ENCODE measurements at regions of chr5 and their contacts with region 1.

Region 1: DNA sequence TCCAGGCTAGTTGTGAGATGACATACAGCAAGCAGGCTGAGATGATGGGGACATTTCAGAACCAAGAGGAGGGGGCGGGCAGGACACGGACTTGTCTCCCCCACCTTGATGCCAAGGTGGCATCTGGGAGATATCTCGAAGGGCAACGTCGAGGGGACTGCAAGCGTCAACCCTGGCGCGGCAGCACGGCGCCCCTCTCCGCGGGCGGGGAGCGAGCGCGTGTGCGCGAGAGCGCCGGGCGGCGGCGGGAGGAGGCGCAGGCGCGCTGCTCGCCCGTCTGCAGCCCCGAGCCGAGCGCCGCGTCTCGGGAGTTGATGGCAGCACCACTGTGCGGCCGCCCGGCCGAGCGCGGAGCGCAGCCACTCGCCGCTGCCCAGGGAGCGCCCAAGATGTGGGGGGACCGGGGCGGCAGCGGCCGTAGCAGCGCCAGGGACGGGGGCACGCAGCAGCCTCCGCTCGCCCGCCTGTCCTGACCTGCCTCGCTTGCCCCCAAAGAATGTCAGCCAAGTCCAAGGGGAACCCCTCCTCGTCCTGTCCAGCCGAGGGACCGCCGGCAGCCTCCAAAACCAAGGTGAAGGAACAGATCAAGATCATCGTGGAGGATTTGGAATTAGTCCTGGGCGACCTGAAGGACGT is at the start of gene PRR16:
- DNase-seq: peak; percentile 35 to 69
- ATAC-seq: peak; percentile 81 to 96 (median 88)
- H3K4me3 ChIP-seq: peak within 1 kb of the TSS; percentile 50 to 85 (median 72)
- H3K27ac ChIP-seq: peak within 1 kb of the TSS; percentile 56 to 89 (median 81)
- H3K4me1 ChIP-seq: peaks cover 0 to 27% (median 20%) of the 10 kb centered on the region in 9 donors
- H3K27me3 ChIP-seq: peaks cover 0 to 41% (median 0%) of the 10 kb centered on the region in 7 donors
- CTCF ChIP-seq: peak in 5 of 9 donors; percentile 36 to 53 (median 49)
- total RNA-seq, gene PRR16: 5.6 to 22.9 (median 11.7) TPM

Region 2: GRCh38 chr5:119943148-119943547 is 521.0 kb before region 1 on chr5:
- intact Hi-C with region 1: loop called in 6 of 10 experiments (anchors 2 to 10 kb)
- DNase-seq: no peak
- ATAC-seq: peak in 2 of 8 donors; percentile 49 to 55
- H3K4me3 ChIP-seq: no peak overlapping the region
- H3K27ac ChIP-seq: no peak overlapping the region
- H3K4me1 ChIP-seq: no peaks in the 10 kb centered on the region
- H3K27me3 ChIP-seq: no peaks in the 10 kb centered on the region
- CTCF ChIP-seq: peak in 8 of 9 donors; percentile 8 to 60 (median 38)

Region 3: GRCh38 chr5:119966028-119966427 is 498.1 kb before region 1 on chr5:
- intact Hi-C with region 1: loop called in 2 of 10 experiments (anchors 5 to 10 kb)
- DNase-seq: no peak
- ATAC-seq: peak in 4 of 8 donors; percentile 57 to 77 (median 69)
- H3K4me3 ChIP-seq: no peak overlapping the region
- H3K27ac ChIP-seq: peak overlapping the region in 1 of 10 donors; percentile 6
- H3K4me1 ChIP-seq: peaks cover 0 to 5% (median 0%) of the 10 kb centered on the region in 9 donors
- H3K27me3 ChIP-seq: no peaks in the 10 kb centered on the region
- CTCF ChIP-seq: peak in 7 of 9 donors; percentile 14 to 52 (median 34)

Region 4: DNA sequence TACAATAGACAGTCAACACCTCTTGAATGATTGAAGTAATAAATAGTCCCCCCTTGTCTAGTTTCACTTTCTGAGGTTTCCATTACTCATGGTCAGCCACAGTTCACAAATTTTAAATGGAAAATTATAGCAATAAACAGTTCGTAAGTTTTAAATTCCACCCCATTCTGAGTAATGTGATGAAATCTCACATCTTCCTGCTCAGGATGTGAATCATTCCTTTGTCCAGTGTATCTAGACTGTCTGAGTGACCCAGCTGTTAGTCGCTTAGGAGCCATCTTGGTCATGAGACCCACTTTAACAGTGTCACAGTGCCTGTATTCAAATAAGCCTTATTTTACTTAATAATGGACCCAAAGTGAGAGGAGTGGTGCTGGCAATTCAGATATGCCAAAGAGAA is 311.6 kb before region 1 on chr5:
- intact Hi-C with region 1: loop called in 2 of 10 experiments (anchors 10 kb)
- DNase-seq: no peak
- ATAC-seq: peak in 4 of 8 donors; percentile 51 to 86 (median 70)
- H3K4me3 ChIP-seq: no peak overlapping the region
- H3K27ac ChIP-seq: peak overlapping the region in 2 of 10 donors; percentile 14 to 75
- H3K4me1 ChIP-seq: peaks cover 0 to 8% (median 0%) of the 10 kb centered on the region in 9 donors
- H3K27me3 ChIP-seq: no peaks in the 10 kb centered on the region
- CTCF ChIP-seq: no peak

Region 5: DNA sequence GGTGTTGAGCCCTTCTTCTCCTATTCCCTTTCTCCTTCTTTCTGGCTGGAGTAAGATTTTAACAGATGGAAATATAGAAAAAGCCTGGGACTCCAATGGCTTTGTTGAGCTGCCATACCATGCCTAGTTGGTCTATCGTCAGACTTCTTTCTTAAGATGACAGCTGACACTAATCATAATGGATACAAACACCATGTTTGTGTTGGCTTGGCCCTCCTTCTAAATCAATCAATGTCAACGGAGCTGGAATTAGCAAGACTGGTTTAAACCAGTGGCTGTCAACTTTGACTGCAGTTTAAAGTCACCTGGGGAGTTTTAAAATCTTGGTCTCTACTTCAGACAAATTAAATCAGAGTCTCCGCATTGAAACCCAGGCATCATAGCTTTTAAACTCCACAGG is 264.6 kb before region 1 on chr5:
- intact Hi-C with region 1: no loop called
- DNase-seq: no peak
- ATAC-seq: no peak
- H3K4me3 ChIP-seq: no peak overlapping the region
- H3K27ac ChIP-seq: no peak overlapping the region
- H3K4me1 ChIP-seq: no peaks in the 10 kb centered on the region
- H3K27me3 ChIP-seq: no peaks in the 10 kb centered on the region
- CTCF ChIP-seq: no peak

Region 6: DNA sequence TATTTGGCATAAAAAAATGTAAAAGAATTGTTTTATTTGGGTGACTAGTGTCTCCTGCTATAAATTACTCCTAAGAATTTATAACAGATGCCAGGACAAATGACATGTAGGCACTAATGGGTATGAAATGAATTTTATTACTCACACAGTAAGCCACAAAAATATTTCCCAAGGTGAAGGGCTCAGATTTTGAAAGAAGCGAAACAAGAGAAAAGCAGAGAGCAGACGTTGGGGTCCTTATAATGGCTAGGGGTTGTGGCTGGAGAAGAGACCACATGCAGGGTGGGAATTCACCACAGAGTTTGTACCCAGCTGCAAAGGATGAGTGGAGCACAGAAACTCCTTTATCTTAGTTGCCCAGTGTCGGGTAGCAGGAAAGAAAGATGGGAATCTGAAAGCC is 45.0 kb before region 1 on chr5:
- intact Hi-C with region 1: no loop called
- DNase-seq: no peak
- ATAC-seq: no peak
- H3K4me3 ChIP-seq: no peak overlapping the region
- H3K27ac ChIP-seq: no peak overlapping the region
- H3K4me1 ChIP-seq: no peaks in the 10 kb centered on the region
- H3K27me3 ChIP-seq: no peaks in the 10 kb centered on the region
- CTCF ChIP-seq: no peak

Region 7: DNA sequence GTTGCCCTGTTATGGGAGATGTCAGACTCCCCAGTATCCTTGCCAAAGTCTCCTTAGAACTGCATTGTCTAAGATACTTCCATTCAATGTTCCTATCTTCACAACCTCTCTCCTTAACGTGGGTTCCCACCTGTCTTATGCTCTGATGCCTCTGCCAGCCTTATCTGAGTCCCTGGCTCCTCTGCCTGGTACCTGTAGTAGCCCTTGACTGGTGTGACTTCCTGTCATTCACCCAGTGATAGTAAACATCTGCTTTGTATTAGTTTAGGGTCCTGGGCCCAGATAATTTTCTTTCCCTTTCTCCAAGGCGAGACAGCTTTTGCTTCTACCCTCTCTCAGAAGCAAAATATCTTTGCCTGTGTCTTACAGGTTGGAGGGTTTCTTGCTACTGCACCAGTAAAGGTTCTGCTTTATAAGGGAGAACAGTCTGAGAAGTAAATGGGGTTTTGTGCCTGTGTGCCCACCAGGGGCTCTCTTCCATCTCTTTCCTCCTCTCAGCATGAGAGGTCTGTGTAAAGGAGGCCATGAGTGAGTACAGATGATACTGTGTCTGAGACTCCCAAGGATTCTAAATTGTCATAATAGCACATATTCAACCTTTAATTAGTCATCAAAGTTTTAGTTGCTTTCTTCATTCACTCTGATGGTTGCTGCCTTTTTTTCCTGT is 220.8 kb after region 1 on chr5:
- intact Hi-C with region 1: loop called in 2 of 10 experiments (anchors 10 kb)
- DNase-seq: no peak
- ATAC-seq: peak in 1 of 8 donors; percentile 31
- H3K4me3 ChIP-seq: no peak overlapping the region
- H3K27ac ChIP-seq: no peak overlapping the region
- H3K4me1 ChIP-seq: no peaks in the 10 kb centered on the region
- H3K27me3 ChIP-seq: no peaks in the 10 kb centered on the region
- CTCF ChIP-seq: no peak